Activated CD8-positive, alpha-beta memory T cell treated with anti-CD3 and anti-CD28 coated beads, Interleukin-2, amount 10 ng/mL, durations not matched to agents 7 days and 5 days (primary cell): ENCODE measurements at regions of chr1 and their contacts with region 1.

Region 1: DNA sequence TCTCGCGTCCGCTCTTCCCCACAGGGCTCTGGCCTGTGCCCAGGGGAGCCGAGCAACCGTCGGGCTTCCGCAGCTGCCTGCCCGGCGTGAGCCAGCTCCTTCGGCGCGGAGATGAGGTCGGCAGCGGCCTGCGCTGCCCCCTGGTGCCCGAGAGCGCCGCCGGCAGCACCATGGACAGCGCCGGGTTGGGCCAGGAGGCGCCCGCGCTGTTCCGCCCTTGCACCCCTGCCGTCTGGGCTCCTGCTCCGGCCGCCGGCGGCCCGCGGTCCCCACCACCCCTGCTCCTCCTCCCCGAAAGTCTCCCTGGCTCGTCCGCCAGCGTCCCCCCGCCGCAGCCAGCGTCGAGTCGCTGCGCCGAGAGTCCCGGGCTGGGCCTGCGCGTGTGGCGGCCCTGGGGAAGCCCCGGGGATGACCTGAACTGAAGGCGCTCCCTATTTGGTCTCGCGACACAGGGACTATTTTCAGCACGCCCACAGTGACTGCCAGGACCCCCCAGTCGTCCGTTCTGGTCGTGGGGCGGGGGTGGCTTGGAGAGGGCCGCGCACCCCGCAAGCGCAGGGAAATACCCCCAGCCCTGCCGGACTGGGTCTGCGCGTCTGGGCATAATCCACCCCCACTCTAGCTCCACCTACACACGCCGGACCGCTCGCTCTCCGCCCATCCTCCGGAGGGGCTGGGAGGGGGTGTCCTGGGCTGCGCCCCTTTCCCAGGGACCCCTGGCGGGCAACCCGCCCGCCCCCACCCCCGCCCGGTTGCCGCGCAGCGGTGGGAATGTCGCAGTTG is 1.3 kb downstream of the HES3 start:
- DNase-seq: peak; percentile 82
- ATAC-seq: peak; percentile 78
- H3K4me3 Mint-ChIP-seq: no peak overlapping the region
- H3K27ac Mint-ChIP-seq: no peak overlapping the region
- H3K4me1 Mint-ChIP-seq: peaks cover 19% of the 10 kb centered on the region
- H3K27me3 Mint-ChIP-seq: peaks cover 66% of the 10 kb centered on the region

Region 2: DNA sequence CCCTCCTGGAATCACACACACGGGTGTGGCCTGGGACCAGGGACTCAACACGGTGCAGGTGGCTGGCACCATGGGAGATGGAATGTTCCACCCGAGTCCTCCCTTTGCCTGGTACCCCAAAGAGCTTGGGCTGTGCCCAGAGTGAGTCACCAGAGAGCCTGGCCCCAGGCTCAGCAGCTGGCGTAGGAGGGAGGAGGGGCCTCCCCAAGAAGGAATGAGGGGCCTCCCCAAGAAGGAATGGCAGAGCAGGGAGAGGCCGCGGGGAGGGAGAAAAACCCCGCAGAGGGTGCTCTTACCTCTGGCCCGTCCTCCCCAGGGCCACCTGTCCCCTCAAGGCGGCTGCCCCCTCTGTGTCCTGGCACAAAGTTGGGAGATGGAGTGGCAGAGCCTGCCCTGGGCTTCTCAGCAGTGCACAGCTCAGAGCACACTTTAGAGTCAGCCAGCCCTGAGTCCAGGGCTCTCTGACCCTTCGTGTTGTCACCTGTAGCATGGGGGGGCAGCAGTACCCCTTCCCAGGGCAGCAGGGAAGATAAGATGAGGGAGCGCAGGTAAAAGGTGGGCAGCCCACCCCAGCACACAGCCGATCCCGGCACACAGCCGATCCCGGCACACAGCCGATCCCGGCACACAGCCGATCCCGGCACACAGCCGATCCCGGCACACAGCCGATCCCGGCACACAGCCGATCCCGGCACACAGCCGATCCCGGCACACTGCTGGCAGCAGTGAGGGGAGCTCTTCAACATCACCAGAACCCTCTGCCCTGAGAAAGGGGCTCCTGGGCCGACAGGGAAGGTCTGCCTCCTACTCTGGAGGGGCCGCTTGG is 219.8 kb before region 1 on chr1:
- CTCF ChIA-PET with region 1: no interaction called
- DNase-seq: no peak
- ATAC-seq: no peak
- H3K4me3 Mint-ChIP-seq: peak overlapping the region; percentile 83
- H3K27ac Mint-ChIP-seq: peak overlapping the region; percentile 98
- H3K4me1 Mint-ChIP-seq: peaks cover 43% of the 10 kb centered on the region
- H3K27me3 Mint-ChIP-seq: no peaks in the 10 kb centered on the region

Region 3: GRCh38 chr1:6059866-6060265 is 185.4 kb before region 1 on chr1:
- CTCF ChIA-PET with region 1: no interaction called
- DNase-seq: no peak
- ATAC-seq: no peak
- H3K4me3 Mint-ChIP-seq: no peak overlapping the region
- H3K27ac Mint-ChIP-seq: no peak overlapping the region
- H3K4me1 Mint-ChIP-seq: no peaks in the 10 kb centered on the region
- H3K27me3 Mint-ChIP-seq: no peaks in the 10 kb centered on the region

Region 4: GRCh38 chr1:6259491-6260425 is 14.5 kb after region 1 on chr1:
- CTCF ChIA-PET with region 1: interaction called, 16 read pairs
- DNase-seq: peak; percentile 88
- ATAC-seq: peak; percentile 75
- H3K4me3 Mint-ChIP-seq: peak overlapping the region; percentile 40
- H3K27ac Mint-ChIP-seq: no peak overlapping the region
- H3K4me1 Mint-ChIP-seq: peaks cover 12% of the 10 kb centered on the region
- H3K27me3 Mint-ChIP-seq: peaks cover 15% of the 10 kb centered on the region

Region 5: GRCh38 chr1:6359216-6360116 is 114.2 kb after region 1 on chr1:
- CTCF ChIA-PET with region 1: interaction called, 15 read pairs
- DNase-seq: peak; percentile 81
- ATAC-seq: peak; percentile 81
- H3K4me3 Mint-ChIP-seq: peak overlapping the region; percentile 53
- H3K27ac Mint-ChIP-seq: peak overlapping the region; percentile 91
- H3K4me1 Mint-ChIP-seq: peaks cover 36% of the 10 kb centered on the region
- H3K27me3 Mint-ChIP-seq: no peaks in the 10 kb centered on the region

Region 6: DNA sequence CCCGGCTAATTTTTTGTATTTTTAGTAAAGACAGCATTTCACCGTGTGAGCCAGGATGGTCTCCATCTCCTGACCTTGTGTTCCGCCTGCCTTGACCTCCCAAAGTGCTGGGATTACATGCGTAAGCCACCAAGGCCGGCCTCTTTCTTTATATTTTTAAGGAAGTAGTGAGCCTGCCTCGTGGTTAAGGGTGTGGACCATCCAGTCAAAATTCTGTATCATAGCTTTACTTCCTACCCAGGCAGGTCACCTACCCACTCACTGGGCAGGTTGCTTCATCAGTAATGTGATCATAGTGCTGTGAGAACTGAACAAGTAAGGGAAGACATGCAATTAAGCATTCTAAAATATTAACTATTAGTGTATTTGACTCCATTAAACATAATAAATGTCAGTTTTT is 156.4 kb after region 1 on chr1:
- CTCF ChIA-PET with region 1: interaction called, 58 read pairs
- DNase-seq: no peak
- ATAC-seq: no peak
- H3K4me3 Mint-ChIP-seq: no peak overlapping the region
- H3K27ac Mint-ChIP-seq: no peak overlapping the region
- H3K4me1 Mint-ChIP-seq: no peaks in the 10 kb centered on the region
- H3K27me3 Mint-ChIP-seq: peaks cover 26% of the 10 kb centered on the region

Region 7: GRCh38 chr1:6423321-6423999 is 178.2 kb after region 1 on chr1:
- CTCF ChIA-PET with region 1: interaction called, 21 read pairs
- DNase-seq: peak; percentile 73
- ATAC-seq: peak; percentile 70
- H3K4me3 Mint-ChIP-seq: no peak overlapping the region
- H3K27ac Mint-ChIP-seq: no peak overlapping the region
- H3K4me1 Mint-ChIP-seq: peaks cover 17% of the 10 kb centered on the region
- H3K27me3 Mint-ChIP-seq: peaks cover 68% of the 10 kb centered on the region